Caco-2 (cell line): ENCODE measurements at regions of chr7 and their contacts with region 1.

Region 1: DNA sequence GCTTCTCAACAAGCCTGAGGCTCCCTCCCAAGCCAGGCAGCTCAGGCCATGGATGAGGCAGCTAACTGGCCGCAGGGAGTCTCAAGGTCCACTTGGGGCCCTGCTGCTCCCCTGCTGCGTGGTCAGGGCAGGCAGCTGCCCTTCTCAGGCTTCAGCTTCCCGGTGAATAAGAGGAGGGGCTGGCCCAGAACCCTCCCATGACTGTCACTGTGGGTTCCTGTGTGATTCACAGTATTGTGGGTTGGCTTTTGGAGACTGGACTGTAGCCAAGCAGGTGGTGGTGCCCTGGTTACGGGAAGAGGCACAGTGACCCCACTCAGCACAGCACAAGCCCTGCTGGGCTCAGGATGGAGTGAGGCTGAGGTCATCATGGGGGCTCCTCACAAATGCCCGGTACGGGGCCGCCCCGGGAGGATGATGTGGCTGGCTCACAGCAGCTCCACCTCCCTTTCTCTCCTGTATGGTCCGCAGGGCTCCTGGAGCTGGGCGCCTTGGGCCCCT is 189.8 kb downstream of the HECW1 start:
- DNase-seq: peak; percentile 30 to 63
- H3K4me3 ChIP-seq: no peak overlapping the region
- H3K4me3 Mint-ChIP-seq: no peak overlapping the region
- H3K27ac Mint-ChIP-seq: no peak overlapping the region
- H3K4me1 ChIP-seq: no peaks in the 10 kb centered on the region
- H3K4me1 Mint-ChIP-seq: no peaks in the 10 kb centered on the region
- H3K27me3 ChIP-seq: no peaks in the 10 kb centered on the region
- H3K27me3 Mint-ChIP-seq: peaks cover 9% of the 10 kb centered on the region
- CTCF ChIP-seq: no peak

Region 2: GRCh38 chr7:43439631-43440401 is 137.6 kb after region 1 on chr7:
- CTCF ChIA-PET with region 1: no interaction called
- POLR2A ChIA-PET with region 1: no interaction called
- intact Hi-C with region 1: loop called (anchors 10 kb)
- DNase-seq: peak; percentile 57 to 59
- H3K4me3 ChIP-seq: no peak overlapping the region
- H3K4me3 Mint-ChIP-seq: no peak overlapping the region
- H3K27ac Mint-ChIP-seq: no peak overlapping the region
- H3K4me1 ChIP-seq: no peaks in the 10 kb centered on the region
- H3K4me1 Mint-ChIP-seq: no peaks in the 10 kb centered on the region
- H3K27me3 ChIP-seq: no peaks in the 10 kb centered on the region; the same call in 1 of the 2 replicates
- H3K27me3 Mint-ChIP-seq: peaks cover 3% of the 10 kb centered on the region
- CTCF ChIP-seq: peak; percentile 60 to 94

Region 3: GRCh38 chr7:43491984-43492383 is 189.7 kb after region 1 on chr7:
- CTCF ChIA-PET with region 1: no interaction called
- POLR2A ChIA-PET with region 1: no interaction called
- intact Hi-C with region 1: no loop called
- DNase-seq: no peak
- H3K4me3 ChIP-seq: no peak overlapping the region
- H3K4me3 Mint-ChIP-seq: no peak overlapping the region
- H3K27ac Mint-ChIP-seq: no peak overlapping the region
- H3K4me1 ChIP-seq: peaks cover 31% of the 10 kb centered on the region
- H3K4me1 Mint-ChIP-seq: peaks cover 26% of the 10 kb centered on the region
- H3K27me3 ChIP-seq: no peaks in the 10 kb centered on the region
- H3K27me3 Mint-ChIP-seq: no peaks in the 10 kb centered on the region
- CTCF ChIP-seq: no peak